Sigmoid colon (tissue), 7 donors: ENCODE measurements at regions of chr19 and their contacts with region 1.

Region 1: DNA sequence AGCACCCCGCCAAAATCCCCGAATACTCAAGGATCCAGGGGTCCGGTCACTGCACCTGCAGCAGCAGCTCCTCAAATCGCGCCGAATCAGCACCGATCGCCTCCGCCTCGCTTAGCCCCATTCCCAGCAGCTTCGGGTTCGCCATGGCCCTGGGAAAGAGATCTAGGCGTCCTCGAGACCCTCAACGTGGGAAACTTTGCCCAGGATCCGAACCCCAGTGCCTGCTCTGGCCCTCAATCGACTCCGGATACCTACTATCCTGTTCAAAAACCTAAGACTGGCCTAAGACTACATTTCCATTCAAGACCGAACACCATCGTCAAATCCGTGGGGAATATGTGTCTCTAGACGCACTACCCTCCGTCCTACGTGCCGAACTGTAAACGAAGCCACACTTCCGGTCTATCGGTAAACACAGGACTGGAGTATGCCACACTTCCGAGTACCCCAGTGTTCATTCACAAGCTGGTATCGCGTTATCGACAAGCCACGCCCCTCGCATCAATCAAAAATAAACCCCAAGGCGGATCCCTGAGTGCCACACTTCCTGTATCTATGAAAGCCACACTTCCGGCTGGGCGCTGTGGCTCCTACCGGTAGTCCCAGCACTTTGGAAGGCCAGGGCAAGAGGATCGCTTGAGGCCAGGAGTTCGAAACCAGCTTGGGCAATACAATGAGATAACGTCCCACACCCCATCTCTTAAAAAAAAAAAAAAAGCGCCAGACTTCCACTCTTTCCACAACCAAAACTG is at the start of gene PIH1D1:
- DNase-seq: peak; percentile 99
- H3K4me3 ChIP-seq: peak within 1 kb of the TSS; percentile 54 to 71 (median 60)
- H3K27ac ChIP-seq: peak within 1 kb of the TSS; percentile 96 to 99 (median 97)
- H3K4me1 ChIP-seq: peaks cover 0 to 46% (median 17%) of the 10 kb centered on the region in 4 donors
- H3K27me3 ChIP-seq: no peaks in the 10 kb centered on the region
- CTCF ChIP-seq: no peak
- EP300 ChIP-seq: peak in 1 of 4 donors; percentile 27
- POLR2A ChIP-seq: no peak
- total RNA-seq, gene PIH1D1: 62.9 to 99.6 (median 81.4) TPM

Region 2: DNA sequence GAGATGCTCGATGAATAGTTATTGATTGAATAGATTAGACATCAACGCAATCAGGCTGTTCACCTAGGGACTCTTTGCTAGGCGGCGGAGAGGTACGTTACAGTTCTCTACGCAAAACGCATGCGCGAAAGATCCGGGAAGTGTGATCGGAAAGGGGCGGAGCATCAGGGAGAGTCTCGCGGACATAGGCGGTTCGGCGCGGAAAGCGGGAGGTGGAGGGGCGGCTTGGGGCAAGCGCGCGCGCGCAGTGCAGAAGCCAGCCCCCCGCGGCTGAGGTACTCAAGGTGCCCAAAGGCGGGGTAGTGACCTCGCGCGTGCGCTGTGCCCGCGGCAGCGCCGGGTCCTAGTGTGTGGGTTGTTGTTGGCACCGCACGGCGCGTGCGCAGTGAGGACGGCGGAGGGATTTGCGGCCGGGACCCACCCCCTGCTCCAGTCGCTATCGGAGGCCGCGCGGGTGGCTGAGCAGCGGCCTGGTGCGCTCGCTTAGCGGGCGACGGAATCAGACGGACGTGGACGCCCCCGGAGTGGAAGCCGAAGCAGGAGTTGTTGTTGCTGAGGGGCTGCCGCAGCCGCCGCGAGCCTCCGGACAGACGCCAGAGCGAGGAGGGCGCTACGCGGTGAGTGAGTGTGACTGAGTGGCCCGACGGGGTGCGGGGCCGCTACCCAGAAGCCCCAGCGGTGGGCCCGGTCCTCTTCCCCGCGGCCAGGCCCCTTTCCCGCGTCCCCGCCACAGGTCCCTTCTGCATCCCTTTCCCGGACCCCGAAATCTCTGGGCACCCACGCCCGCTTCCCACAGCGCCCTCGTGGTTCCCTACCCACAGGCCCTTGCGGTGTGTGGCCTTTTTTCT is 366.4 kb before region 1 on chr19 and contains the start of gene SNRNP70:
- intact Hi-C with region 1: loop called (anchors 10 kb)
- DNase-seq: peak; percentile 100
- H3K4me3 ChIP-seq: peak within 1 kb of the TSS; percentile 74 to 85 (median 80)
- H3K27ac ChIP-seq: peak within 1 kb of the TSS; percentile 90 to 96 (median 91)
- H3K4me1 ChIP-seq: peaks cover 0 to 34% (median 32%) of the 10 kb centered on the region in 4 donors
- H3K27me3 ChIP-seq: no peaks in the 10 kb centered on the region
- CTCF ChIP-seq: no peak
- EP300 ChIP-seq: peak in 1 of 4 donors; percentile 62
- POLR2A ChIP-seq: peak; percentile 72 to 79
- total RNA-seq, gene SNRNP70: 156 to 382 (median 237) TPM

Region 3: GRCh38 chr19:50025024-50025789 is 573.6 kb after region 1 on chr19 and contains the start of gene VRK3:
- intact Hi-C with region 1: loop called (anchors 10 kb)
- DNase-seq: peak; percentile 100
- H3K4me3 ChIP-seq: peak within 1 kb of the TSS; percentile 83 to 95 (median 90)
- H3K27ac ChIP-seq: peak within 1 kb of the TSS; percentile 92 to 94 (median 92)
- H3K4me1 ChIP-seq: peaks cover 0 to 31% (median 28%) of the 10 kb centered on the region in 4 donors
- H3K27me3 ChIP-seq: no peaks in the 10 kb centered on the region
- CTCF ChIP-seq: peak in 1 of 4 experiments; percentile 21
- EP300 ChIP-seq: peak in 1 of 4 donors; percentile 38
- POLR2A ChIP-seq: peak; percentile 69 to 74
- total RNA-seq, gene VRK3: 17.4 to 30.7 (median 24.8) TPM